ENCODE measurements at regions of chr1 and their contacts with region 1.

Region 1: GRCh38 chr1:155084722-155085503 is 6.3 kb downstream of the EFNA3 start:
- DNase-seq: peak; percentile 95
- ATAC-seq: peak; percentile 77 to 85
- H3K4me3 ChIP-seq: peak overlapping the region; percentile 59
- H3K27ac ChIP-seq: peak overlapping the region; percentile 74 to 88
- H3K4me1 ChIP-seq: peaks cover 47% of the 10 kb centered on the region
- CTCF ChIP-seq: peak; percentile 82
- EP300 ChIP-seq: no peak
- POLR2A ChIP-seq: peak; percentile 11; the same call in 1 of the 2 replicates
- RAD21 ChIP-seq: peak; percentile 95 to 98

Region 2: DNA sequence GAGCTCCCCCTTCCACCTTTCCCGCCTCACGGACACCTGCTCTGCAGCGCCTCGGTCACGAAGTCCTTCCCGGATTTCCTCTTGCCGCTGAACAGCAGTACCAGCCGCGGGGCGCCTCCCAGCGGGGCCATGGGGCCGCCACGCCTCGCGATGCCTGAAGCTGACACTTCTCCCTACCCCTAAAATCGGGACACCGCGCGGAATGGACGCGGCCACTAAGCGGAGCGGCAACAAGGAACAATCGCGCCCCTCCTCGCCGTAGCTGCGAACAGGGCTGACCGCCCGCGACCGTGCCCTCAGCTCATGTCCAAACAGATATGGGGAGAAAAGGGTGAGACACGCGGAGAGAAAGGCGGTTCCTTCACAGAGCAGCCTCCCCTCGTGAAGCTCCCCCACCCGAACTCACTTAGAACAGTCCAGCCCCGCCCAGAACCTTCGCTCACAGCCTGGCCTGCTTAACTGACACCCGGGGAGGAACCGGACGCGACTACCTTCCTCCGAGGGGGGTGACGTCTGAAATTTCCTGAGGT is 148.3 kb before region 1 on chr1 and contains the start of gene PMVK:
- CTCF ChIA-PET with region 1: interaction called, 20 read pairs
- POLR2A ChIA-PET with region 1: no interaction called
- DNase-seq: peak; percentile 97
- ATAC-seq: peak; percentile 86 to 91
- H3K4me3 ChIP-seq: peak within 1 kb of the TSS; percentile 61
- H3K27ac ChIP-seq: peak within 1 kb of the TSS; percentile 97 to 98
- H3K4me1 ChIP-seq: peaks cover 25% of the 10 kb centered on the region
- CTCF ChIP-seq: peak; percentile 39; the same call in 2 of the 3 replicates
- EP300 ChIP-seq: no peak
- POLR2A ChIP-seq: peak; percentile 80
- RAD21 ChIP-seq: peak in 1 of 2 experiments; percentile 32; a peak in 3 of 5 replicates
- polyA plus RNA-seq, gene PMVK: 31.4 and 35.7 TPM in 2 replicates

Region 3: GRCh38 chr1:155044812-155045690 is 39.9 kb before region 1 on chr1:
- CTCF ChIA-PET with region 1: interaction called, 36 read pairs
- POLR2A ChIA-PET with region 1: no interaction called
- DNase-seq: peak; percentile 88
- ATAC-seq: peak; percentile 93 to 96
- H3K4me3 ChIP-seq: no peak overlapping the region
- H3K27ac ChIP-seq: peak overlapping the region; percentile 69 to 86
- H3K4me1 ChIP-seq: peaks cover 35% of the 10 kb centered on the region
- CTCF ChIP-seq: peak; percentile 73
- EP300 ChIP-seq: no peak
- POLR2A ChIP-seq: no peak
- RAD21 ChIP-seq: peak; percentile 75 to 81

Region 4: GRCh38 chr1:155099331-155099730 is 14.4 kb after region 1 on chr1:
- CTCF ChIA-PET with region 1: interaction called, 67 read pairs
- POLR2A ChIA-PET with region 1: no interaction called
- DNase-seq: no peak
- ATAC-seq: no peak
- H3K4me3 ChIP-seq: no peak overlapping the region
- H3K27ac ChIP-seq: no peak overlapping the region
- H3K4me1 ChIP-seq: peaks cover under 1% of the 10 kb centered on the region; the same call in 1 of the 3 replicates
- CTCF ChIP-seq: no peak
- EP300 ChIP-seq: no peak
- POLR2A ChIP-seq: no peak
- RAD21 ChIP-seq: no peak

Region 5: DNA sequence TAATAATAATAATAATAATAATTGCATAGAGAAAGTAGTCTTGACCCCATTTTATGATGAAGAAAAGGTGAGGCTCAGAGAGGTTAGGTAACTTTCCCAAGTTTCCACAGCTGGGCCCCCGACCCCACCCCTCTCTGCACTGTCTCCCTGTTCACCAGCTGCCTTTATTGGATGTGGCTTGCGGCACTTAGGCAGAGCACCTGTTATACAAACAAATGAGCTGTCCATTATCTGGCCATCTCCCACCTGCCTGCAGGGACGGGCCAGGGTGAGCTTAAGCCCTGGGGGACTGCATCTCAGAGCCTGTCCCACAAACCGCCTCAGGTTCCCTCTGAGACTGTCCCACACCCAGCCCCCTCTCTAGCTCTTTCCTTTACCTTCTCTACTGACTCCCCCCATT is 32.7 kb after region 1 on chr1:
- CTCF ChIA-PET with region 1: interaction called, 309 read pairs
- POLR2A ChIA-PET with region 1: no interaction called
- DNase-seq: no peak
- ATAC-seq: no peak
- H3K4me3 ChIP-seq: no peak overlapping the region
- H3K27ac ChIP-seq: no peak overlapping the region
- H3K4me1 ChIP-seq: no peaks in the 10 kb centered on the region
- CTCF ChIP-seq: no peak
- EP300 ChIP-seq: no peak
- POLR2A ChIP-seq: no peak
- RAD21 ChIP-seq: no peak

Region 6: DNA sequence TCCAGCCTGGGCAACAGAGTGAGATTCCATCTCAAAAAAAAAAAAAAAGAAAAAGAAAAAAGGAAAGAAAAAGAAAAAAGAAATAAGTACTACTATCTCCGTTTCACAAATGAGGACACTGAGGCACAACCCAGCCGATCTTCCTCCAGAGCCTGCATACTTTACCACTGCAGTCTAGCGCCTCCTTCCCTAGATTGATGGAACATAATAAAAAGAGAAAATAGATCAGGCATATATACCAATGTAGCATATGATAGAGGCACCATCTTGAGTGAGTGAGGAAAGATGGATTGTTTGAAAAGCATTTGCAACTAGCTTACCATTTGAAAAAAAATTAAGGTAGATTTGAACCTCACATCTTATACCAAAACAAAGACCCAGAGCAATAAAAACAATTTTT is 60.6 kb after region 1 on chr1:
- CTCF ChIA-PET with region 1: interaction called, 79 read pairs
- POLR2A ChIA-PET with region 1: no interaction called
- DNase-seq: no peak
- ATAC-seq: peak in 1 of 2 experiments; percentile 52; a peak in 1 of 6 replicates
- H3K4me3 ChIP-seq: no peak overlapping the region
- H3K27ac ChIP-seq: no peak overlapping the region
- H3K4me1 ChIP-seq: no peaks in the 10 kb centered on the region
- CTCF ChIP-seq: no peak
- EP300 ChIP-seq: no peak
- POLR2A ChIP-seq: no peak
- RAD21 ChIP-seq: no peak

Region 7: GRCh38 chr1:155261852-155262673 is 177.2 kb after region 1 on chr1 and contains the start of gene SCAMP3:
- CTCF ChIA-PET with region 1: no interaction called
- POLR2A ChIA-PET with region 1: no interaction called
- DNase-seq: peak; percentile 99 to 100
- ATAC-seq: peak; percentile 96 to 98
- H3K4me3 ChIP-seq: peak within 1 kb of the TSS; percentile 86
- H3K27ac ChIP-seq: peak within 1 kb of the TSS; percentile 88 to 97
- H3K4me1 ChIP-seq: peaks cover 14% of the 10 kb centered on the region
- CTCF ChIP-seq: no peak
- EP300 ChIP-seq: no peak
- POLR2A ChIP-seq: peak; percentile 84
- RAD21 ChIP-seq: no peak
- polyA plus RNA-seq, gene SCAMP3: 135 and 147 TPM in 2 replicates

Measured in A549 (cell line).